ENCODE measurements at regions of chr9 and their contacts with region 1.

Region 1: DNA sequence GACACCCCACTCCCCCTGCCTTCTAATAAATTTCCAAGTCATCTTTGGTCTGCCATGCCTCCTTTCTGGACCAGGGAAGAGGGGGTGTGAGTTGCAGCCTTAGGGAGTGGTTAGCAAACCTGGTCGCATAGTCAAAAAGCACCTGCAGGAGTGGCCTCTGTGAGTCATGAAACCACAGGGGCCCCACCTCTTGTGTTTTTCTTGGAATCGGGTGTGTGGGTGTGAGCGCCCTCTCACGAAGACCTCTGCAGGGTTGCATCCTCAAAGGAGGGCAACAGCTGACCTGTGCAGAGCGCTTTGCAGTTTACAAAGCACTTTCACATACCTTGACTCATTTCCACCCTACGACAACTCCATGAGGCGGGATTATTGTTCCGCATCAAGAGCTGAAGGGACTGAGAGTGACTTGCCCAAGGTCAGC is 36.8 kb upstream of the TEX48 start:
- DNase-seq: peak; percentile 94
- H3K4me3 Mint-ChIP-seq: peak overlapping the region; percentile 28
- H3K27ac Mint-ChIP-seq: peak overlapping the region; percentile 98
- H3K4me1 Mint-ChIP-seq: peaks cover 82% of the 10 kb centered on the region
- H3K27me3 Mint-ChIP-seq: peaks cover 2% of the 10 kb centered on the region

Region 2: DNA sequence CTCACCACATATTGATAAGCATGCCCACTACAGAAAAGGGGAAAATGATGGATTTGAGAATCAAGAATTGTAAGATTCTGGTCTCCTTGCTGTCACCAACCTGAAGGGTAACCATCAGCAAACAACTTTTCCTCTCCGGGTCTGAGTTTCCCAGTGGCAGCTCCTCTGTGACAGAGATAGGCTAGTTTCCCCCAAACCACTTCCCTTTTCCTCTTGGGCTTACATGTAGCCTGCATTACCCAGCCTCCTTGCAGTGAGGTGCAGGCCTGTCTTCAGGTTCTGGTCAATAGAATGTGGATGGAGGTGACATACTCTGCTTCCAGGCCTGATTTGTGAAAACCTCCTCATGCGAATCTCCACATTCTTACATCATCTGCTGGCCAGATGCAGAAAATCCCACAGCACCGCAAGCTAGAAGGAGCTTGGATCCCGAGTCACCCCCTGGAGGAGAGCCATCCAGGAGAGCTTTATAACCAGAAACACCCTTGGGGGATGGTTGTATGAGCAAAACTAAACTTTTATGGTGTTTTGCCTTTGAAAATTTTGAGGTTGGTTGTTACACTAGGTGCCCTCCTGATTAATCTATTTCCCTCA is 1049.2 kb before region 1 on chr9:
- intact Hi-C with region 1: no loop called
- DNase-seq: no peak
- H3K4me3 Mint-ChIP-seq: no peak overlapping the region
- H3K27ac Mint-ChIP-seq: no peak overlapping the region
- H3K4me1 Mint-ChIP-seq: no peaks in the 10 kb centered on the region
- H3K27me3 Mint-ChIP-seq: peaks cover 19% of the 10 kb centered on the region

Region 3: DNA sequence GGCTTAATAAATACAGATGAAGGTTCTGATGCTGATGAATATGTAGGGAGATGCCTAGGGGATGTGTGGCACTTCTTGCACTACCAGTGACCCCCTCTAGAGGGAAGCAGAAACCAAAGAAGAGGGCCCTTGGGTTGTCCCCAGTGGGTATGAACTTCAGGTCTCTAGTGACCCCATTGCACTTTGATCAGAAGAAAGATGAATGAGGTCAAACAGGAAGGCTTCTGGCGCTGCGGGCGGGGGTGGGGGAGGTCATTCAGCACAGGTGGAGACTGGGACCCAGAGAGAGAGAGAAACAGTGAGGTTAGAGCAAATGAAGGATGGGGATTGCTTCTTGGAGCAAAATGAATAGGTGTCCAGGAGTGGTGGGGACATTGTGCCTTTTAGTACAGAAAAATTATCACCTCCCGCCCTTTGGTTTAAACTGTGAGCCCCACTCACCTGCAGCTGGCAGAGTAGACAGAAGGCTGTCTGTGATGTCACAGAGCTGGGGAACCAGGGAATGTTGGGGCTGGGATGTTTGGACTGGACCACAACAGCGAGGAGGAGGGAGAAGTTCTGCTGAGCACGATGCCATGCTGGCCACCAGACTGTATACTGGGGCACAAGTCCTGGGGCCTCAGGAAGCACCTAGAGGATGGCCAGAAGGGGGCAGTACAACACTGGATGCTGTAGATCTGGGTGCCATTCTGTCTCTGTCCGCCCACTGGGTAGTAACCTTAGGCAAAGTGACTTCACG is 37.0 kb before region 1 on chr9 and contains the start of gene TEX48:
- intact Hi-C with region 1: loop called (anchors 1 kb)
- DNase-seq: peak; percentile 76
- H3K4me3 Mint-ChIP-seq: peak within 1 kb of the TSS; percentile 49
- H3K27ac Mint-ChIP-seq: peak within 1 kb of the TSS; percentile 97
- H3K4me1 Mint-ChIP-seq: peaks cover 81% of the 10 kb centered on the region
- H3K27me3 Mint-ChIP-seq: no peaks in the 10 kb centered on the region
- total RNA-seq, gene TEX48: 1.0 and 1.2 TPM in 2 replicates

Region 4: DNA sequence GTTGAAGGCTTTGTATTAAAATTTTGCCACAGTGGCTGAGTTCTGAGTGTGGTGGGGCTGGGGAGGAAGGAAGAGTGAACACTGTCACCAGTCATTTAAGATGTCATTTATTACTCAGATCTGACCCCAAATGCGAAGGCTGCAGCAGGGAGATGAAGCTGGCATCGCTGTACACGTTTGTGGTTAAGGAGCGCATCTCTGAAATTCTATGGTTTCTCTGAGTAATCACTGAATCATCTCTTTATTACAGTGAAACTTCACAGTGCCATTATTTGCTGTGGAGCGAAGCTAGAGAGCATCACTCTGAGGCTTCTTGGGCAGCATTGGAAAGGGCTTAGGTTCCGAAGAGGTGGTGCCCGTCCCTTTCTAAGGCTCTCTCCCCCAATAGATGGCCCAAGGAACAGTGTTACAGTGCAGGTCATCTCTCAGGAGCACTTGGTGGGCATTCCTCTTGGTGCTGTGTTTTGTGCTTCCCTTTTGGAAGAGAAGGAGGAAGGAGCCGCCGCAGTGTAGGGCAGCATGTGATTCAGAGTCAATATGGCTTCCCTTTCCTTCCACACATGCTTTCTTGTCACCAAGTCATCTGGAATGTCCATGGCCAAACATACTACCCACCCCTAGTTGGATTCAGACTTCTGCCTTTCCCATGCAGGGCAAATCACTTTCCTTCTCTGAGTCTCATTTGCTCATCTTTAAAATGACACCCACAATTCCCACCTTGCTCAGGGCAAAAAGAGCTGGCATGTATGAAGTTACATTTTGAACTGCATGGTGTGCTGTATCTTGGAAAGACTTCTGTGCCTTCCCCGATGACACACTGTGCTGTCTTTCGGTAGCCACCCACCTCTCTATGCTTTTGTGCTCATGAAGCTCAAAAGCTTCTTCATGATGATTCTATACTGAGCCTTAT is 27.5 kb before region 1 on chr9:
- intact Hi-C with region 1: loop called (anchors 1 kb)
- DNase-seq: peak; percentile 80
- H3K4me3 Mint-ChIP-seq: peak overlapping the region; percentile 69
- H3K27ac Mint-ChIP-seq: peak overlapping the region; percentile 98
- H3K4me1 Mint-ChIP-seq: peaks cover 93% of the 10 kb centered on the region
- H3K27me3 Mint-ChIP-seq: no peaks in the 10 kb centered on the region

Region 5: DNA sequence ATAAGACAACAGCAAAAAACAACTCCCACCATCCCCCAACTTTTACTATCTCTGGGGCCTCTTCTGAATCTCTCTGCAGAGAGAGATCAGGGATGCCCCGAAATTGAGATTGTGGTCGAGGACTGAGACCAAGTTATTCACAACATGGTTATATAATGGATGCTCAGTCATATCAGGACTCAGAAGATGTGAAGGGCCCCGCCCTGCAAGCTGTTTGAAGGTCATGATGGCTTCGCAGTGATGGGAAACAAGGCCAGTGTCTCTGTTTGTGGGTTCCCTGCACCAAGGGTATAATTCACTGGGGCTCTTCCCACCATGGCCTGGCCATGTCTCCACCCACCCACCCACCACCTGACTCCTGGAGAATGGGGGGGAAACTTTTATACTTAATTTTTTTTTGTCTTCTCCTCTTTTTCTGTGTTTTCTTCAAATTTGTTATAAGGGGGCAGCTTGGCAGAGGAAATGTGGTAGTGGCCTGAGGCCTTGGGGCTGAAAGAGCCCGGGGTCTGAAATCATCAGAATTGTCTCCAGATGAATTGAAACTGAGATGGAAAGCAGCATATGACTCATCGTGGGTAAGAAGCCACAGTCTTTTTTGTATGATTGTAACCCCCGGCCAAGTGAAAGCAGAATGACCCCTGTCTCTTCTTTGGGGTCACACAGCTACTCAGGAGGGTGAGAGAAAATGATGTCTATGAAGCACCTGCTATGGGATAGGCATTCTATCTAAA is 21.8 kb before region 1 on chr9:
- intact Hi-C with region 1: loop called (anchors 1 kb)
- DNase-seq: peak; percentile 80
- H3K4me3 Mint-ChIP-seq: peak overlapping the region; percentile 46
- H3K27ac Mint-ChIP-seq: peak overlapping the region; percentile 95
- H3K4me1 Mint-ChIP-seq: peaks cover 92% of the 10 kb centered on the region
- H3K27me3 Mint-ChIP-seq: no peaks in the 10 kb centered on the region

Region 6: GRCh38 chr9:114894801-114895433 is 176.1 kb after region 1 on chr9:
- intact Hi-C with region 1: loop called (anchors 2 kb)
- DNase-seq: peak; percentile 54
- H3K4me3 Mint-ChIP-seq: peak overlapping the region; percentile 16
- H3K27ac Mint-ChIP-seq: peak overlapping the region; percentile 90
- H3K4me1 Mint-ChIP-seq: peaks cover 57% of the 10 kb centered on the region
- H3K27me3 Mint-ChIP-seq: no peaks in the 10 kb centered on the region

Region 7: GRCh38 chr9:114930056-114930812 is 211.4 kb after region 1 on chr9 and contains the start of gene TNFSF8:
- intact Hi-C with region 1: no loop called
- DNase-seq: peak; percentile 73
- H3K4me3 Mint-ChIP-seq: peak within 1 kb of the TSS; percentile 98
- H3K27ac Mint-ChIP-seq: peak within 1 kb of the TSS; percentile 99
- H3K4me1 Mint-ChIP-seq: peaks cover 62% of the 10 kb centered on the region
- H3K27me3 Mint-ChIP-seq: no peaks in the 10 kb centered on the region
- total RNA-seq, gene TNFSF8: 200 and 207 TPM in 2 replicates

Region 8: DNA sequence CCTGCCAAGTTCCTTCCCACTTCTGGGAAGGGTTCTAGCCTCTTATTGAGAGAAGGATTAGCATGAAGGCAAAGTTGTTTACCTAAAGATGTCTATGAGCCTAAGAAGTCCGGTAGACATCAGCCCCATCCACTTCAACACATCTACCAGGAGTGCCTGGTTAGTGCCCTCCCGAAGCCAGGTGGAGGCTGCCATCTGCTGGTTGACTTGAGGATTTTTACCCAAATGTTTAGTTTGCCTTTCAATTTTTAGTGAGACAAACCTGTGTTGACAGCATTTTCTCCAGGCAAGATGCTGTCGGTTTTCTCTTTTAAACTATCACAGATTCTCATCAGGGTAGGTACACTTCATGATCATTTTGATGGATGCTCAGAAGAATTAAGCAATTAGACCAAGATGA is 295.2 kb after region 1 on chr9:
- intact Hi-C with region 1: loop called (anchors 1 kb)
- DNase-seq: peak; percentile 73
- H3K4me3 Mint-ChIP-seq: no peak overlapping the region
- H3K27ac Mint-ChIP-seq: peak overlapping the region; percentile 52
- H3K4me1 Mint-ChIP-seq: peaks cover 72% of the 10 kb centered on the region
- H3K27me3 Mint-ChIP-seq: peaks cover 3% of the 10 kb centered on the region